A549 (cell line): ENCODE measurements at regions of chr3 and their contacts with region 1.

Region 1: DNA sequence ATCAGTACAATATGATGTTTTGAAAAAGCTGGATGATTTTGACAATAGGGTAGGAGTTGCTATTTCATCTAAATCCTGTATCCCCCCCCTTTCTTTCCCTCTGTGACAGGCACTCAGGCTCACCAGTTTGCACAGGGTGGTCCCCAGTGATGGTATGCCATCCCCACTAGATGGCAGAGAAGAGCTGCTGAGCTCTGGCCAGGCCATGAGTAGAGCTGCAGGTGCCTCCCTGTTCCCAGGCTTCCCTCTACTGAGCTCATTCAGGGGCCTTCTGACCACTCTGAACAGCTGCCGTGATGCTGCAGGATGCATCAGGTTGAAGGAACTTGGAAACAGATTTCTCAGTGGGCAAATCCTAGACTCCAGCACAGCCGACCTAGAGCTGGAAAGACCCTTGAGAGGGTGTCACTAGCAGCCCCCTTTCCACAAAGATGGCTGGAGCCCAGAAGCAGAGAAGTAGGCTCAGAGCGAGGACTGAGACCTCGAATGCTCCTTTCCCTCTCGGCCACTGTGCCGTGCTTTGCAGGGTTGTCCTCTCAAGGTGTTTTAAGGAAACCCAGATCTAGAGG is 45.1 kb downstream of the EFCAB12 start:
- DNase-seq: peak; percentile 71 to 76
- ATAC-seq: peak; percentile 95 to 98
- H3K4me3 ChIP-seq: no peak overlapping the region
- H3K27ac ChIP-seq: peak overlapping the region; percentile 48 to 81; a peak in 5 of 6 replicates
- H3K4me1 ChIP-seq: peaks cover 38% of the 10 kb centered on the region
- CTCF ChIP-seq: peak; percentile 72
- EP300 ChIP-seq: no peak
- POLR2A ChIP-seq: no peak
- RAD21 ChIP-seq: peak; percentile 87 to 90

Region 2: DNA sequence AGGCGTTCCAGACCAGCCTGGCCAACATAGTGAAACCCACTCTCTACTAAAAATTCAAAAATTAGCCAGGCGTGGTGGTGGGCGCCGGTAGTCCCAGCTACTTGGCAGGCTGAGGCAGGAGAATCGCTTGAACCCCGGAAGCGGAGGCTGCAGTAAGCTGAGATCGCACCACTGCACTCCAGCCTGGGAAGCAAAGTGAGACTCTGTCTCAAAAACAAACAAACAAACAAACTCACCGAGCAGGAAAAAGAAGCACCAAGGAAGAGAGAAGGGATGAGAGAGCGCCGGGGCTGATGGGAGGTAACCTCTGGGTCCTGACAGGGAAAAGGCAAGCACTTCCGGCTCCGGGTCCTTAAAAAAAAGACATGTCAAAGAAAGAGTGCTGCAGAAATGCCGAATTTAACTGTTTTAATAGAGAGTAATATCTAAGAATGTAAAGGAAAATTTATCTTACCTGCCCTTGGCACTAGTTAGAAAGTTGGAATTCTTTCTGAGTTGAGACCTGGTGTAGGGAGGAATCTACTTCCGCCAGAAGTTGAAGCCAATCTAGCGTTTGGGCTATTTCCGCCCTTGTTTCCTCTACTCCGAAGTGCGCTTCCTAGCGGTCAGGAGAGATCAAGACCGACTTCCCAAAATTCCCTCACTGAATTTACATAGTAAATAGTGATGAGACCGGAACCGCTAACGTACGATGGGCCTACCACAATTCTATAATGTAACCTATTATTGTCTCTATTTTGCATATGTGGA is 15.9 kb after region 1 on chr3:
- CTCF ChIA-PET with region 1: interaction called, 48 read pairs
- POLR2A ChIA-PET with region 1: interaction called, 8 read pairs
- DNase-seq: peak; percentile 83 to 95
- ATAC-seq: peak; percentile 90 to 93
- H3K4me3 ChIP-seq: peak overlapping the region; percentile 72
- H3K27ac ChIP-seq: peak overlapping the region; percentile 94 to 97
- H3K4me1 ChIP-seq: peaks cover 34% of the 10 kb centered on the region
- CTCF ChIP-seq: peak; percentile 67
- EP300 ChIP-seq: no peak
- POLR2A ChIP-seq: no peak
- RAD21 ChIP-seq: peak; percentile 31 to 32; a peak in 2 of 5 replicates

Region 3: DNA sequence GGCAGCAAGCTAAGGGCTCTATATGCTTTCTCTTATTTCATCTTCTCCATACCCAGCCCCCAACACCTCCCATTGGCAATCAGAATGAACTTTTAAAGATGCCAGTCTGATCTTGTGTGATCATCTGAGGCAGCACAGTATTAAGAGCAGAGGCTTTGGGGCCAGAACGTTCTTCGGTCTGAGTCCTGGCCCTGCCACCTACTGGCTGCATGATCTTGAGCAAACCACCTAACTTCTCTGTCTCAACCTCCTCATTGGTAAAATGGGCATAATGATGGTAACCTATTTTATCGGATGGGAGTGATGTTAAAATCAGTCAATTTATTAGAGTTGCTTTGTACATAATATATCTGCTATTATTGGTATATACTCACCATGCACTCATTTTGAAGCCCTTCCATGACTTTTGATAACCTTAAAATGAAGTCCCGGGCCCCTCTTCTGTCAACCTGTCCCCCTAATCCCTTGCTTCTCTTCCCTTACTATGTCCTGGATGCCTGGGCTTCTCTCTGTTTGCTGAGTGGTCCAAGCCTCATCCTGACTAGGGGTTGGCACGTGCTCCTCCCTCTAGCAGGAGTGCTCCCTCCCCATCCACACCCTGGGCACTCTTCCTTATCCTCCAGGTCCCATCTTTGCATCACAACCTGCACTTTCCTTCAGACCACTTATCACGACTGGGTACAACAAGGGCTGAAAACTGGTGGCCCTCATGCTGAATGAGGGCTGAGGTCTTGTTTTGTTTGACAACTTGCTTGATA is 38.8 kb after region 1 on chr3:
- CTCF ChIA-PET with region 1: interaction called, 16 read pairs
- POLR2A ChIA-PET with region 1: no interaction called
- DNase-seq: peak in 1 of 2 experiments; percentile 40
- ATAC-seq: peak in 1 of 2 experiments; percentile 74; a peak in 3 of 6 replicates
- H3K4me3 ChIP-seq: no peak overlapping the region
- H3K27ac ChIP-seq: peak overlapping the region; percentile 16 to 26; a peak in 4 of 6 replicates
- H3K4me1 ChIP-seq: peaks cover 30% of the 10 kb centered on the region
- CTCF ChIP-seq: peak; percentile 22
- EP300 ChIP-seq: no peak
- POLR2A ChIP-seq: no peak
- RAD21 ChIP-seq: peak in 1 of 2 experiments; percentile 38; a peak in 2 of 5 replicates

Region 4: GRCh38 chr3:129439817-129440617 is 56.6 kb after region 1 on chr3 and contains the starts of genes IFT122 and MBD4:
- CTCF ChIA-PET with region 1: interaction called, 9 read pairs
- POLR2A ChIA-PET with region 1: interaction called, 12 read pairs
- DNase-seq: peak; percentile 98
- ATAC-seq: peak; percentile 94 to 95
- H3K4me3 ChIP-seq: peak within 1 kb of the TSS; percentile 86
- H3K27ac ChIP-seq: peak within 1 kb of the TSS; percentile 94 to 99
- H3K4me1 ChIP-seq: peaks cover 40% of the 10 kb centered on the region; the same call in 2 of the 3 replicates
- CTCF ChIP-seq: no peak
- EP300 ChIP-seq: no peak
- POLR2A ChIP-seq: peak; percentile 78
- RAD21 ChIP-seq: no peak
- polyA plus RNA-seq, gene IFT122: 17.1 and 20.3 TPM in 2 replicates
- polyA plus RNA-seq, gene MBD4: 38.2 and 49.7 TPM in 2 replicates

Region 5: DNA sequence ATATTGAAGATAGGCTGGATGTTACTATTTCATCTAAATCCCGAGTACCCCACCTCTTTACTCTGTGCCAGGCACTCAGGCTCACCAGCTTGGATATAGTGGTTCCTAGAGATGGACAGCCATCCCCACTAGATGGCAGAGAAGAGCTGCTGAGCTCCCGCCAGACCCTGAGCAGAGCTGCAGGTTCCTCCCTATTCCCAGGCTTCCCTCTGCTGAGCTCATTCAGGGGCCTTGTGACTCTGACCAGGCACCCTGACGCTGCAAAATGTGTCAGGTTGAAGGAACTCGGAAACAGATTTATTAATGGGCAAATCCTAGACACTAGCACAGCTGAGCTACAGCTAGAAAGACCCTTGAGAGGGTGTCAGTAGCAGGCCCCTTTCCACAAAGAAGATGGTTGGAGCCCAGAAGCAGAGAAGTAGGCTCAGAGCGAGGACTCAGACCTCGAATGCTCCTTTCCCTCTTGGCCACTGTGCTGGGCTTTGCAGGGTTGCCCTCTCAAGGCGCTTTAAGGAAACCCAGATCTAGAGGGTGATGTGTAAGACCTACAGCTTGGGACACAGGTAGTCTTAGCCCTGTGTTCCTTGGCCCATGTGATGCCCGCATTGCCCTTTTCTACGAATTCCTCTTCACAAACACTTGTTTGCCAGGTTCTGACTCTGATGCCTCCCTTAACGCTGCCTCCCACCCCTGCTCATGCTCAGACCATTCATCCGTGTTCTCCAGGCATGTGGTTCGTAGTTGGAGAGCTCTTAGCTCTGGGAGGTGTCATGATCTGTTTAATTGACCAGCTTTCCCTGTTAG is 107.1 kb after region 1 on chr3:
- CTCF ChIA-PET with region 1: interaction called, 10 read pairs
- POLR2A ChIA-PET with region 1: no interaction called
- DNase-seq: peak; percentile 83 to 89
- ATAC-seq: peak; percentile 89 to 93
- H3K4me3 ChIP-seq: no peak overlapping the region
- H3K27ac ChIP-seq: peak overlapping the region; percentile 89 to 92
- H3K4me1 ChIP-seq: peaks cover 22% of the 10 kb centered on the region
- CTCF ChIP-seq: peak; percentile 87
- EP300 ChIP-seq: no peak
- POLR2A ChIP-seq: no peak
- RAD21 ChIP-seq: peak; percentile 93 to 95